ENCODE measurements at regions of chr6 and their contacts with region 1.

Region 1: DNA sequence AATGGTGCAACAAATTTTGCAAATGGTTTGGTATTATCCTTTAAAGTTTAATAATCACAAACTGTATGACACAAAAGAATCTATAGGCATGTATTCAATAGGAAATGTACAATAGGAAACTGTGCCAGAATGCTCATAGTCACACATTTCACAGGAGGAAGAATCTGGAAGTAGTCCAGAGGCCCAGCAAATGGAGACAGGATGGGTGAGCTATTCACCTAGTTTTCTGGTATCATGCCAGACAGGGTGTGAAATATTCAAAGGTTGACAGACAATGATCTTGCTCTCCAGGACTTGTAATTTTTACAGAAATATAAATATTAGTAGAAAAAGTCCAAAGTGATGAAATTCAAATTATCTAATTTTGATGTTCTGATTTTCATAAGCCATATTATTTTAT is 520.1 kb upstream of the IMPG1 start:
- DNase-seq: peak; percentile 38
- H3K4me3 ChIP-seq: no peak overlapping the region
- H3K27ac ChIP-seq: no peak overlapping the region
- H3K4me1 ChIP-seq: peaks cover 4% of the 10 kb centered on the region
- H3K27me3 ChIP-seq: no peaks in the 10 kb centered on the region
- CTCF ChIP-seq: no peak
- POLR2A ChIP-seq: no peak

Region 2: GRCh38 chr6:76574746-76575145 is 17.8 kb before region 1 on chr6:
- CTCF ChIA-PET with region 1: interaction called, 10 read pairs
- POLR2A ChIA-PET with region 1: no interaction called
- dilution Hi-C with region 1: no loop called
- intact Hi-C with region 1: no loop called
- DNase-seq: no peak
- H3K4me3 ChIP-seq: no peak overlapping the region
- H3K27ac ChIP-seq: no peak overlapping the region
- H3K4me1 ChIP-seq: no peaks in the 10 kb centered on the region
- H3K27me3 ChIP-seq: no peaks in the 10 kb centered on the region
- CTCF ChIP-seq: no peak
- POLR2A ChIP-seq: no peak

Measured in endothelial cell of umbilical vein (primary cell).